ENCODE measurements at regions of chr1 and their contacts with region 1.

Region 1: GRCh38 chr1:1574721-1575537 is at the start of gene SSU72:
- DNase-seq: peak; percentile 83
- ATAC-seq: peak; percentile 85
- H3K4me3 ChIP-seq: peak within 1 kb of the TSS; percentile 84 to 97
- H3K27ac ChIP-seq: peak within 1 kb of the TSS; percentile 99
- H3K4me1 ChIP-seq: peaks cover 17 to 22% of the 10 kb centered on the region in 2 experiments
- H3K27me3 ChIP-seq: no peaks in the 10 kb centered on the region
- CTCF ChIP-seq: no peak
- POLR2A ChIP-seq: no peak
- RAD21 ChIP-seq: no peak
- total RNA-seq, gene SSU72: 134 TPM

Region 2: DNA sequence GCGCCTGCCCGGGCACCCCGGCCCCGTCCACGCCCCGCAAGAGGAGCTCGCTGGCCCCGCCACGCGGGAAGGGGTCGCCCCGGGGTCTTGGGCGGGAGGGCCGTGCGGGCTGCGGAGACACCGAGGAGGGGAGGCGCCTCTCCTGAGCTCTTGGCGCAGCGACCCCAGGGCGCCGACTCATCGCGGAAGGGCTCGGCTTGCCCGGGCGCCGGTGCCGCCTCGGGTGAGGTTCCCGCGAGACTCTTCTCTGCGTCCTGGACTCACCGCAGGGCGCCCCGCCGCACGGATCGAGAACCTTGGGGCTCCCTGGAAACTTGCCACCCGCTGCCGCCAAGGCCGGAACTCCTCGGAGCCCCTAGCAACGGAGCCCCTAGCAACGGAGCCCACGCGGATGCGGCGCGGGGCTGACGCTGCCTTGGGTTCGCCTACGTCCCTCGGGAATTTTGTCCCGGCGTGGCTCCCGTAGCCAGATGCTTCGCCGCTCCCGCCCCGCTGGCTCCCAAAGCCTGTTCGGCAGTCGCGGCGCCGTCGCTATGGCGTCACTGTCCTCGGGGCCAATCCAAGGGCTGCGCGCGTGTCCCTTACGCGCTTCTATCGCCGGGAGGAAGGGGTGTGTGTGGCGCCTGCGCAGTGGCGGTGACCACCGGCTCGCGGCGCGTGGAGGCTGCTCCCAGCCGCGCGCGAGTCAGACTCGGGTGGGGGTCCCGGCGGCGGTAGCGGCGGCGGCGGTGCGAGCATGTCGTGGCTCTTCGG is 63.2 kb before region 1 on chr1 and contains the start of gene ATAD3A:
- CTCF ChIA-PET with region 1: no interaction called
- POLR2A ChIA-PET with region 1: no interaction called
- RAD21 ChIA-PET with region 1: no interaction called
- intact Hi-C with region 1: loop called (anchors 5 kb)
- DNase-seq: peak; percentile 93
- ATAC-seq: peak; percentile 89
- H3K4me3 ChIP-seq: peak within 1 kb of the TSS; percentile 84 to 85
- H3K27ac ChIP-seq: peak within 1 kb of the TSS; percentile 95
- H3K4me1 ChIP-seq: peaks cover 7 to 13% of the 10 kb centered on the region in 2 experiments; a peak in 3 of 4 replicates
- H3K27me3 ChIP-seq: no peaks in the 10 kb centered on the region
- CTCF ChIP-seq: no peak
- POLR2A ChIP-seq: no peak
- RAD21 ChIP-seq: no peak
- total RNA-seq, gene ATAD3A: 92.3 TPM

Measured in HCT116 (cell line).